ENCODE measurements at regions of chr3 and their contacts with region 1.

Region 1: DNA sequence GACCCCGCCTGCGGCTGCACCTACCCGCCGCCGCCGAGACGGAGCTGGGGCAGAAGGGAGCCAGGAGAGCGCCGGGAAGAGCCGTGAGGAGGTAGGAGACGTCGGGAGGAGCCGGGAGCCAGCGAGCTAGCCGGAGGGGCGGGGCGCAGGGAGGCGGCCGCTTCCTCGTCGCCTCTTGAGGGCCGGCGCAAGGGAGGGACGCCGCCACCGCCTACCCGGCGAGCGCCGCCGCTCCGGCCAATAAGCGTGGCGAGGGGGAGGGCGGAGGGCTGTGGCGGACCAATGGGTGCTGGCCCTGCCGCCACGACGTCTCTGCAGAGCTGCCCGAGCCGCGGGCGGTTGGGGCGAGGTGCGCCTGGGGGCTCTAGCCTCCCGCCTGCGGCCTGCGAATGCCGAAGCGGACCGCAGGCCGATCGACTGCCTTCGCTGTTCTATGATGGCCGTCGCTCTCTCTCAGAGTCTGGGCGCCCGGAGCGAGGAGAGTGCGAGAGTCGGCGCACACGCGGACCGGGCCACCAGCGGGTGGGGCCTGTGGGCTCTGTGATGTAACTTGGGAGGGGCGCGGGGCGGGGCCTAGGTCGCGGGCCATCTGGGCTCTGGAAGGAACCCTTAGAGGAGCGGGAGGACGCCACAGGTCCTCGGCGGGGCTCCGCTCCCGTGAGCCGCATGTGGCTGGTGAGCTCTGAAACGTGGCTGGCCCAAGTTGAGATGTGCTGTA is 72.7 kb upstream of the MAP4 start:
- DNase-seq: peak; percentile 90 to 98 (median 96)

Region 2: DNA sequence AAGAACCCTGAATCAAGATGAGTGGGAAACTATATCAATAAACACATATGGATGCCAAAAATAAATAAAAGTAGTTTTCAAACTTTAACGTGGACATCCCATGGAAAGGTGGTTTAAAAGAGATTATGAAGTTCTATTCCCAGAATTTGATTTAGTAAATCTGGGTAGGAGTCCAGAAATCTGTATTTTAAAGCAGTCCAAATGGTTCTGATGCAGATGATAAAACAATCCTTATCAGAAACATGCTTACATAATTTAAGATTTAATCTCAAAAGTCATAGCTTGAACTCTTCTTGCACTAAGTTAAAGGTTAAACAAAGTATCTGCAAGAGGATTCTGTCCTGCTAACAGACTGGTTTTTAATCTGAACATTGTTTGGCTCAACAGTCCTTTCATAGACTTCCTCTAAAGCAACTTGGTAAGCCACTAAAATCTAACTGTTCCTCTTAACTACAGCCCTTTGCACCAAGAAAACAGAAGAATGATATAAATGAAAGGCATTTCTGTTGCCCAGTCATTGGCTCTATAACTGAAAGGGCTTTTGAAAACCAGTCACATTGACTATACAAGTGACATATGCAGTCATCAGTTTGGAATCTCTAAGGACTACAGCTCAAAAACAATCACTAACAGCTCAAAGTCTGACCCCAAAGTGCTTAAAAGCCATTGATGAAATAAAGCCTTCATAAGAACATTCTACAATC is 49.3 kb before region 1 on chr3:
- intact Hi-C with region 1: loop called (anchors 5 kb)
- DNase-seq: peak in 1 of 42 donors; percentile 38

Measured in head of caudate nucleus (tissue), 42 donors.